ENCODE measurements at regions of chr7 and their contacts with region 1.

Region 1: GRCh38 chr7:3117488-3118231 is 74.0 kb upstream of the CARD11 start:
- DNase-seq: peak; percentile 69
- H3K4me3 Mint-ChIP-seq: peak overlapping the region; percentile 72
- H3K27ac Mint-ChIP-seq: peak overlapping the region; percentile 75
- H3K4me1 Mint-ChIP-seq: peaks cover 73% of the 10 kb centered on the region
- H3K27me3 Mint-ChIP-seq: no peaks in the 10 kb centered on the region

Region 2: GRCh38 chr7:2403014-2403717 is 714.5 kb before region 1 on chr7 and contains the start of gene CHST12:
- CTCF ChIA-PET with region 1: no interaction called
- POLR2A ChIA-PET with region 1: no interaction called
- intact Hi-C with region 1: no loop called
- DNase-seq: peak; percentile 96
- H3K4me3 Mint-ChIP-seq: peak within 1 kb of the TSS; percentile 79
- H3K27ac Mint-ChIP-seq: no peak within 1 kb of the TSS
- H3K4me1 Mint-ChIP-seq: peaks cover 45% of the 10 kb centered on the region
- H3K27me3 Mint-ChIP-seq: no peaks in the 10 kb centered on the region
- total RNA-seq, gene CHST12: 3.7 to 3.9 TPM

Region 3: GRCh38 chr7:3092468-3092867 is 25.2 kb before region 1 on chr7:
- CTCF ChIA-PET with region 1: interaction called, 35 read pairs
- POLR2A ChIA-PET with region 1: interaction called, 3 read pairs
- intact Hi-C with region 1: loop called (anchors 2 kb)
- DNase-seq: peak; percentile 91
- H3K4me3 Mint-ChIP-seq: peak overlapping the region; percentile 27
- H3K27ac Mint-ChIP-seq: peak overlapping the region; percentile 89
- H3K4me1 Mint-ChIP-seq: peaks cover 70% of the 10 kb centered on the region
- H3K27me3 Mint-ChIP-seq: no peaks in the 10 kb centered on the region

Region 4: GRCh38 chr7:3106361-3106826 is 11.3 kb before region 1 on chr7:
- CTCF ChIA-PET with region 1: interaction called, 6 read pairs
- POLR2A ChIA-PET with region 1: interaction called, 9 read pairs
- intact Hi-C with region 1: loop called (anchors 1 kb)
- DNase-seq: peak; percentile 80
- H3K4me3 Mint-ChIP-seq: no peak overlapping the region
- H3K27ac Mint-ChIP-seq: peak overlapping the region; percentile 84
- H3K4me1 Mint-ChIP-seq: peaks cover 70% of the 10 kb centered on the region
- H3K27me3 Mint-ChIP-seq: no peaks in the 10 kb centered on the region